Vagina (tissue), 2 donors: ENCODE measurements at regions of chr22 and their contacts with region 1.

Region 1: DNA sequence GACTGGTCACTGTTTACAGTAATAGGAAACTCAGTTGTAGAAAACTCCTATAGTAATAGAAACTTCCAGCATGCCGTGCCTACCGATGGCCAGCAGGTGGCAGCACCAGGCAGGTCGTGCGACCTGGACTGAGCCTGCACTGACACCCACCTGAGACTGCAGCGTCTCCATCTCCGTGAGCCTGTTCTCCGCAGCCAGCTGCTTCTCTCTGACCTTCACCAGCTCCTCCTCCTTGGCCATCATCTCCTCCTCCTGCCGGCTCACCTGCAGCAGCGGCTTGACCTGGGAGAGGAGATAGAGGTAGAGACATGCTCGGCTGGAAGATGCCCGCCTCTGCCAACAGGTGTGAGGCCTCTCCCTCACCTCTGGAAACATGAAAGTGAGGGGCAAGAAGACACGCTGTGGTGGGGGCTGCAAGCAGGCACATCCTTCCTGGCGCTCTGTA is 48.5 kb downstream of the APOL1 start:
- DNase-seq: no peak
- H3K4me3 ChIP-seq: no peak overlapping the region
- H3K27ac ChIP-seq: peak overlapping the region; percentile 49
- H3K4me1 ChIP-seq: no peaks in the 10 kb centered on the region
- H3K27me3 ChIP-seq: no peaks in the 10 kb centered on the region
- CTCF ChIP-seq: peak; percentile 91 to 96 (median 93)
- POLR2A ChIP-seq: no peak

Region 2: DNA sequence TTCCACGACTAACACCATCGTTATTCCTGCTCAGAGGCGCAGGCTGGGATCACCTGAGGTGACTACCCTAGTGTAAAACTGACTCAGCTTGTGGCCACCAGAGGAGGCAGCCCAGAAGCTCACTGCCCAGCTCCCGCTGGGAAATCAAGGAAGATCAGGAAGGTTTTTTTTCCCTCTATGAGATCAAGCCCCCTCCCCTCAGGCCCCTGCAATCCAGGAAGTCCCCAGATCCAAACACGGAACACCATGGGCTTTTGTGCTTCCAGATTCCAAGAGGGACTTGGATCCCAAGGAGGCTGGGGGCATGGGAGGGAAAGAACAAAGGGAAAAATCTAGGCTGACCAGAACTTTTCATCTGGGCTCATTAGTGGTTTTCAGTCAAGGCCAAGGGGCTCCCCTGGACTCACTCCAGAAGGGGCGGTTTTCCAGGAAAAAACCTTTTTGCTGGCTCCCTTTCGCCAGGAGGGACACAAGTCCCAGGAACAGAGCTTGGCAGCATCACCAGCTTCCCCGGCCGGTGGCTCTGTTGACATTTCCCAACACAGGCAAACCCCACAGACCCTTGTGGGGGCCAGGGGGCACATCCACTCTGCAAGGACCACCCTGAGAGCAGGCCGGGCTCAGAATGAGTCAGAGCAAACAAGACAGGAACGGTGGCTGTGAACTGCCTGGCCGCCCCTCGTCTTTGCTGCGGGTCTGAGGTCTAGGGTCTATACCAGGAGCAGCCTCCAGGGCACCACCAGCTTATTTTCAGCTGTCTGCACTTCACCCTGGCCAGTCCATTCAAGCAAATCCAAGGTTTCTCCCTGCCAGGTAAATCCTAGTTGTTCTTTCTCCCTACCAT is 49.6 kb after region 1 on chr22:
- intact Hi-C with region 1: no loop called
- DNase-seq: no peak
- H3K4me3 ChIP-seq: no peak overlapping the region
- H3K27ac ChIP-seq: peak overlapping the region; percentile 93
- H3K4me1 ChIP-seq: peaks cover 79% of the 10 kb centered on the region
- H3K27me3 ChIP-seq: no peaks in the 10 kb centered on the region
- CTCF ChIP-seq: no peak
- POLR2A ChIP-seq: no peak

Region 3: DNA sequence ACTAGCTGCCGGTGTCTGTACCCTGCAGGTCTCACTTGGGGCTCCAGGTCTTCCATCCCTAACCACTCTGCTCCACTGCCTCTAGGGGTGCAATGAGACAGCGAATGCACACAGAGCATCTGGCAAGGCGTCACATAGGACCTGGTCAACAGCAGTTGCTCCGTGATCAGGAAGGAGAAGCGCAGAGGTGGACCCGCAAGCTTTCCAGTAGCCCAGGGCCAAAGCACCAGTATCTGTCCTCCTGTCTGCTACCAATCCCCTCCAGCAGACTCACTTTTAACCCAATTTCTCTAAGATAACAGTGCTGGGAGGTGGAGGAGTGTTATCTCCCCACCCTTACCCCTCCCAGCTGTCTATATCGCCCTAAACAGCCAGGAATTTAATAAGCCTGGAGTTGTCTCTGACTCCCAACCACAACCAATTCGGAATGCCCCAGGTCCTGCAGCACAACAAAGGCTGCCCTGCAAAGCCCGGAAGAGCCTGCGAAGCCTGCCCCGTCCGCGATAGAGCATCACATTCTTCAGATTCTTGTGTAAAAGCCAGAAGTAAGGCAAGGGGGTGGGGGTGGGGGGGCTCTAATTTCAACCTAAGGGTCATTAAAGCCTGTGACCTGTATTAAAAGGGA is 67.1 kb after region 1 on chr22:
- intact Hi-C with region 1: no loop called
- DNase-seq: no peak
- H3K4me3 ChIP-seq: peak overlapping the region in 1 of 2 donors; percentile 27
- H3K27ac ChIP-seq: peak overlapping the region; percentile 93
- H3K4me1 ChIP-seq: peaks cover 100% of the 10 kb centered on the region
- H3K27me3 ChIP-seq: no peaks in the 10 kb centered on the region
- CTCF ChIP-seq: no peak
- POLR2A ChIP-seq: no peak

Region 4: DNA sequence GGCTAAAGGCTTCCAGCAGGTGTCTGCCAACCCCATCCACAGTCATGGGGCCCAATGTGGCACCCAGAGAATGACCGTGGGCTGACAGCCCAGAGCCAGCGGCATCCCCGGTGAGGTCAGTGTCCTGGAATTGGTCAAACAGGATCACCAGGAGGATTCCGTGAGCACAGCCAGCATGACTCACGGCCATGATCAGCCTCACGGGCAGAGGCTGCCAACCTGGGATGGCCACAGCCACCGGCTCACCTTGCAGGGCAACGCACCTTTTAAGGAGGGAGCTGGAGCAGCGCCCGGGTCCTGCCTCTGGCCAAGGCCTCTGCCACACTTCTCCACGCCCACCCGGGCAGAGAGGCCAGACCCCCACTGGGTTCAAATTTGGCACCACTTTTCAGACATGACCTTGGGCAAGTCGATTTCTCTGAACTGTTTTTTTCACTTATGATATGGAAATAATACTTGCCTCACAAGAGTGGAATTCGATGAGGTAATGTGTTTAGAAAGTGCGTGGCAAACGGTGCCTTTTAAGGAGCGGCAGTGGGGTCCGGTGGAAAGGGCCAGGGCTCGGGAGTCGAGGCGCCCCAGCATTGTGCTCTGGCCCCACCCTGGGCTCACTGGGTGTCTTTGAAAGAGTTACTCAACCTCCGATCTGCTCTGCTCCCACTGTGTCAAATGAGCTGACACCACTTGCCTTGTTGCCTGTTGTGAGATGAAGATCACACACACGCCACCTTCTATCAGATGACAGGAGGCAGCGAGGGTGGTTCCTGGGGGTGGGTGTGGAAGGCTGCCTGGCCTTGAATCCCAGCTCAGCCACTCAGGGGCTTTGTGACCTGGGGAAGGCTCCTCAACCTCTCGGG is 164.0 kb after region 1 on chr22:
- intact Hi-C with region 1: loop called (anchors 5 kb)
- DNase-seq: no peak
- H3K4me3 ChIP-seq: no peak overlapping the region
- H3K27ac ChIP-seq: peak overlapping the region; percentile 85
- H3K4me1 ChIP-seq: peaks cover 60% of the 10 kb centered on the region
- H3K27me3 ChIP-seq: no peaks in the 10 kb centered on the region
- CTCF ChIP-seq: no peak
- POLR2A ChIP-seq: no peak